ENCODE measurements at regions of chr1 and their contacts with region 1.

Region 1: DNA sequence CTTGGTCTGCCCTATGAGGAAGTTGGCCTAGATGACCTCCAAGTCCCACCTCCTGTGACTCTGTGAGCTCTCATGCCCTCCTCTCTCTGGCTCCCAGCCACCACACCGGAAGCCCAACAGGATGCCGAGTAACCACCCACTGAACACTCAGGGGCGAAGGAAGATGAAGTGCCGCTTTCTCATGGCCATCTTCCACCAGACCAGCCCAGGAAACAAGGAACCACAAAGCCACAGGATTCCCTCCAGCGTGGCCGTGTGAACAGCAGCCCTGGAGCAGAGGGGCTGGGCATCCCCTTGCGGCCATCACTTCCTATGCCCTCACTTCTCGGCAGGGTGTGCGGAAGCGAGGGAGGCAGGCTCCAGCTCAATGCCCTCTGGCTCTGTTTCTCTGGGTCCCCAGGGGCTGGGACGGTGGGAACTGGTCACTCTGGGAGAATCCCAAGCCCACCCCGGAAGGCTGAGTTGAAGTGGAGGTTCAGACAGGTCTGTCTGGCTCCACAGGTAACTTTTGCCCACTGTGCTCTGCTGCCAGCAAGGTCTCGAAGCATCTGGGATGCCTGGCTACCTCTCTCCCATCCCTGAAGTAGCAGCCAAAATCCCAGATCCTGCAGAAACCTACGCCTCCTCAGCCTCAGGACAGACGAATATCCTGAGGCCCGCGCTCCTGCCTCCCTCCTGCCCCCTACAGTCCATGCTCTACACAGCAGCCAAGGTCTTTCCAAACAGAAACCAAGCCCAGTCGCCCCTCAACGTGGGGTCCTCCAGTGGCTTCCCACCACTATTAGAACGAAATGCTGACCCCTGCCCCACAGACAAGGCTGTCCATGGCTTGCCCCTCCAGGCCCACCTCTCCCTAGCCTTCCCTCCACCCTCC is 44.2 kb upstream of the ECE1 start:
- DNase-seq: peak; percentile 89
- H3K4me3 Mint-ChIP-seq: peak overlapping the region; percentile 73
- H3K27ac Mint-ChIP-seq: peak overlapping the region; percentile 94
- H3K4me1 Mint-ChIP-seq: peaks cover 89% of the 10 kb centered on the region
- H3K27me3 Mint-ChIP-seq: no peaks in the 10 kb centered on the region

Region 2: GRCh38 chr1:21176586-21177555 is 157.6 kb before region 1 on chr1 and contains the start of gene EIF4G3:
- CTCF ChIA-PET with region 1: no interaction called
- POLR2A ChIA-PET with region 1: no interaction called
- DNase-seq: peak; percentile 99
- H3K4me3 Mint-ChIP-seq: peak within 1 kb of the TSS; percentile 87
- H3K27ac Mint-ChIP-seq: peak within 1 kb of the TSS; percentile 82
- H3K4me1 Mint-ChIP-seq: peaks cover 31% of the 10 kb centered on the region
- H3K27me3 Mint-ChIP-seq: peaks cover 10% of the 10 kb centered on the region
- total RNA-seq, gene EIF4G3: 48.1 to 49.2 TPM

Region 3: GRCh38 chr1:21280011-21280471 is 54.4 kb before region 1 on chr1:
- CTCF ChIA-PET with region 1: interaction called, 7 read pairs
- POLR2A ChIA-PET with region 1: interaction called, 16 read pairs
- DNase-seq: peak; percentile 47
- H3K4me3 Mint-ChIP-seq: peak overlapping the region; percentile 71
- H3K27ac Mint-ChIP-seq: peak overlapping the region; percentile 93
- H3K4me1 Mint-ChIP-seq: peaks cover 58% of the 10 kb centered on the region
- H3K27me3 Mint-ChIP-seq: no peaks in the 10 kb centered on the region

Measured in activated CD4-positive, alpha-beta memory T cell treated with anti-CD3 and anti-CD28 coated beads, Interleukin-2, amount 10 ng/mL, durations not matched to agents 7 days and 5 days (primary cell).